Esophagus squamous epithelium (tissue), 5 donors: ENCODE measurements at regions of chr11 and their contacts with region 1.

Region 1: GRCh38 chr11:93234602-93235207 is 36.9 kb upstream of the SLC36A4 start:
- DNase-seq: peak; percentile 5
- H3K4me3 ChIP-seq: no peak overlapping the region
- H3K27ac ChIP-seq: no peak overlapping the region
- H3K4me1 ChIP-seq: no peaks in the 10 kb centered on the region
- H3K27me3 ChIP-seq: peaks cover 0 to 24% (median 0%) of the 10 kb centered on the region in 4 donors
- CTCF ChIP-seq: peak; percentile 24 to 93 (median 85)
- POLR2A ChIP-seq: no peak

Region 2: DNA sequence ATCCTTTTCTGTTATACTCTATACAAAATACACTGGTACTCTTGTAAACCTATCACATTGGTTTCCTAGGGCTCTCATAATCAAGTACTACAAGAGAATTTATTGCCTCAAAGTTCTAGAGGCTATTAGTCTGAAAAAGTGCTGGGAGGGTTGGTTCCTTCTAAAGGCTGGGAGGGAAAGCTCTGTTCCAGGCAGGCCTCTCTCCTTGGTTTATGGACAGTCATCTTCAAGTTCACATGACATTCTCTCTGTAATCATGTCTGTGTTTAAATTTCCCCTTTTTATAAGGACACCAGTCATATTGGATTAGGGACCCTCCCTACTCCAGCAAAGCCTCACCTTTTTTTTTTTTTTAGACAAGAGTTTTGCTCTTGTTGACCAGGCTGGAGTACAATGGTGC is 46.0 kb before region 1 on chr11:
- intact Hi-C with region 1: no loop called
- DNase-seq: no peak
- H3K4me3 ChIP-seq: no peak overlapping the region
- H3K27ac ChIP-seq: no peak overlapping the region
- H3K4me1 ChIP-seq: no peaks in the 10 kb centered on the region
- H3K27me3 ChIP-seq: no peaks in the 10 kb centered on the region
- CTCF ChIP-seq: no peak
- POLR2A ChIP-seq: no peak

Region 3: DNA sequence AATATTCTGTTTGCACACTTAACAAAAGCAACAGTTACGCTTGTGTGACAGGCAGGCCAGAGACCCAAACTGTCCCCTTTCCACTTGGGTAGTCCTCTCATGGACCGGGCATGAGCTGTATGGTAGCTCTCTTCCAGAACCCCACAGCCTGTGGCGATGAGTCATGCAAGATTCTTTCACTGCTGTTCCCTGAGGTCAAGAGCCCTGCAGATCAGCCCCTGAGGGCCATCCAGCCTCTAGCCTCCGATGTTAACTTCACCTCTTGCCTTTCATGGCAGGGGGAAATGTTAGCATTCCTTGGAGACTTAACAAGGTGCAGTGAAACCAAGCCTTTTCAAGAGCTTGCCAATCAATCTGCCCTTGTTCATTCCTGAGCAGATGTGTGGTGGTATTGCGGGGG is 32.7 kb after region 1 on chr11:
- intact Hi-C with region 1: no loop called
- DNase-seq: no peak
- H3K4me3 ChIP-seq: no peak overlapping the region
- H3K27ac ChIP-seq: no peak overlapping the region
- H3K4me1 ChIP-seq: no peaks in the 10 kb centered on the region
- H3K27me3 ChIP-seq: peaks cover 0 to 6% (median 0%) of the 10 kb centered on the region in 4 donors
- CTCF ChIP-seq: no peak
- POLR2A ChIP-seq: no peak

Region 4: GRCh38 chr11:93330446-93330984 is 95.8 kb after region 1 on chr11 and contains the start of gene DEUP1:
- intact Hi-C with region 1: no loop called
- DNase-seq: no peak
- H3K4me3 ChIP-seq: peak within 1 kb of the TSS; percentile 17 to 62 (median 36)
- H3K27ac ChIP-seq: no peak within 1 kb of the TSS
- H3K4me1 ChIP-seq: peaks cover 0 to 12% (median 0%) of the 10 kb centered on the region in 3 donors
- H3K27me3 ChIP-seq: peaks cover 0 to 33% (median 1%) of the 10 kb centered on the region in 4 donors
- CTCF ChIP-seq: no peak
- POLR2A ChIP-seq: no peak
- total RNA-seq, gene DEUP1: not detected

Region 5: GRCh38 chr11:93543292-93543977 is 308.7 kb after region 1 on chr11 and contains the start of gene SMCO4:
- intact Hi-C with region 1: loop called (anchors 5 kb)
- DNase-seq: no peak
- H3K4me3 ChIP-seq: peak within 1 kb of the TSS; percentile 51 to 88 (median 72)
- H3K27ac ChIP-seq: peak within 1 kb of the TSS; percentile 66 to 93 (median 82)
- H3K4me1 ChIP-seq: peaks cover 8 to 33% (median 9%) of the 10 kb centered on the region in 3 donors
- H3K27me3 ChIP-seq: no peaks in the 10 kb centered on the region
- CTCF ChIP-seq: peak; percentile 45 to 80 (median 60)
- POLR2A ChIP-seq: peak in 1 of 4 donors; percentile 48
- total RNA-seq, gene SMCO4: 7.1 to 28.2 (median 13.0) TPM

Region 6: DNA sequence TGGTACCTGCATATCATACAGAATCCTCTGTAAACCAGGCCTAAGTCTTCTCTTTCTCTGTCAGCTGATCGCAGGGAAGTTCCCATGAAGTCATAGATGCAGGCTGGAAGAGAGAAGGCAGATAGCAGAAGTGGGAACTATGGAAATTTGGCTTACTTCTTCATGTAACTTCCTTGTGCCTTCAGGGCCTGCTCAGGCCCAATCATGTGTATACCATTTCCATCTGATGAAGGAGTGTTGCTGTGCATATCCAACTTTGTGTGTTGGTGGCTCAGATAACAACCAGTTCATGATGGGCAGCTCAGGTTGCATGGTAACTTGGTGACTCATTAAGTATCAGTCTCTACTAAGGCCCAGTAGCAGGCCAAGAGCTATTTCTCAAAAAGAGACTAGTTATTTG is 373.7 kb after region 1 on chr11:
- intact Hi-C with region 1: no loop called
- DNase-seq: no peak
- H3K4me3 ChIP-seq: no peak overlapping the region
- H3K27ac ChIP-seq: no peak overlapping the region
- H3K4me1 ChIP-seq: no peaks in the 10 kb centered on the region
- H3K27me3 ChIP-seq: no peaks in the 10 kb centered on the region
- CTCF ChIP-seq: no peak
- POLR2A ChIP-seq: no peak

Region 7: DNA sequence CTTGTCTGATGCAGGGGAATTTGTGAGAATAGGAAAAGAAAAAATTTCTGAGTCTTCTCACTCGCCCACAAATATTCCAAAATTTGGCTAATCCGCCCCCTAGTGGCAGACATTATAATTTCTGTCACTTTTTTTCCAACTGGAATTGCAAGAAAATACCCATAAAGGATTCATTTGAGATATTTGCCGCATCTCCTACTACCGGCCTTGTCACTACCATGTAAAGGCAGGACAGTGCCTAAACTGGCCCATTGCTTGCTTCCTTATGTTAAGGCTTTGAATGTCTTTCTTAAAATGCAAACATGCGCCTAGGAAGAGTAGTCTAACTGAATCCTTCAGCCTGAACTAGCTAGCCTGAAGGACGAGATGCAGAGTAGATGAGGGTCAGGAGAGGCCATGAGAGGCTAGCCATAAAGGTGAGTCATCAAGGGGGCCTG is 417.5 kb after region 1 on chr11:
- intact Hi-C with region 1: loop called (anchors 2 kb)
- DNase-seq: no peak
- H3K4me3 ChIP-seq: no peak overlapping the region
- H3K27ac ChIP-seq: no peak overlapping the region
- H3K4me1 ChIP-seq: no peaks in the 10 kb centered on the region
- H3K27me3 ChIP-seq: peaks cover 0 to 28% (median 0%) of the 10 kb centered on the region in 4 donors
- CTCF ChIP-seq: peak; percentile 51 to 78 (median 70)
- POLR2A ChIP-seq: no peak